Activated CD8-positive, alpha-beta T cell treated with anti-CD3 and anti-CD28 coated beads for 36 hours (primary cell): ENCODE measurements at regions of chr19 and their contacts with region 1.

Region 1: GRCh38 chr19:11558881-11559828 is at the start of gene ELOF1:
- DNase-seq: peak; percentile 99
- ATAC-seq: peak; percentile 96
- H3K4me3 Mint-ChIP-seq: peak within 1 kb of the TSS; percentile 91
- H3K27ac Mint-ChIP-seq: peak within 1 kb of the TSS; percentile 93
- H3K4me1 Mint-ChIP-seq: peaks cover 41% of the 10 kb centered on the region
- H3K27me3 Mint-ChIP-seq: no peaks in the 10 kb centered on the region
- CTCF ChIP-seq: no peak
- total RNA-seq, gene ELOF1: 41.3 to 45.7 TPM

Region 2: GRCh38 chr19:11570039-11570462 is 10.9 kb after region 1 on chr19:
- CTCF ChIA-PET with region 1: interaction called, 17 read pairs
- POLR2A ChIA-PET with region 1: interaction called, 7 read pairs
- intact Hi-C with region 1: no loop called
- DNase-seq: no peak
- ATAC-seq: no peak
- H3K4me3 Mint-ChIP-seq: no peak overlapping the region
- H3K27ac Mint-ChIP-seq: no peak overlapping the region
- H3K4me1 Mint-ChIP-seq: peaks cover 11% of the 10 kb centered on the region
- H3K27me3 Mint-ChIP-seq: no peaks in the 10 kb centered on the region
- CTCF ChIP-seq: no peak

Region 3: GRCh38 chr19:11581740-11582139 is 22.6 kb after region 1 on chr19:
- CTCF ChIA-PET with region 1: interaction called, 28 read pairs
- POLR2A ChIA-PET with region 1: interaction called, 17 read pairs
- intact Hi-C with region 1: loop called (anchors 2 kb)
- DNase-seq: peak; percentile 82
- ATAC-seq: peak; percentile 89
- H3K4me3 Mint-ChIP-seq: peak overlapping the region; percentile 65
- H3K27ac Mint-ChIP-seq: peak overlapping the region; percentile 94
- H3K4me1 Mint-ChIP-seq: peaks cover 36% of the 10 kb centered on the region
- H3K27me3 Mint-ChIP-seq: no peaks in the 10 kb centered on the region
- CTCF ChIP-seq: no peak

Region 4: DNA sequence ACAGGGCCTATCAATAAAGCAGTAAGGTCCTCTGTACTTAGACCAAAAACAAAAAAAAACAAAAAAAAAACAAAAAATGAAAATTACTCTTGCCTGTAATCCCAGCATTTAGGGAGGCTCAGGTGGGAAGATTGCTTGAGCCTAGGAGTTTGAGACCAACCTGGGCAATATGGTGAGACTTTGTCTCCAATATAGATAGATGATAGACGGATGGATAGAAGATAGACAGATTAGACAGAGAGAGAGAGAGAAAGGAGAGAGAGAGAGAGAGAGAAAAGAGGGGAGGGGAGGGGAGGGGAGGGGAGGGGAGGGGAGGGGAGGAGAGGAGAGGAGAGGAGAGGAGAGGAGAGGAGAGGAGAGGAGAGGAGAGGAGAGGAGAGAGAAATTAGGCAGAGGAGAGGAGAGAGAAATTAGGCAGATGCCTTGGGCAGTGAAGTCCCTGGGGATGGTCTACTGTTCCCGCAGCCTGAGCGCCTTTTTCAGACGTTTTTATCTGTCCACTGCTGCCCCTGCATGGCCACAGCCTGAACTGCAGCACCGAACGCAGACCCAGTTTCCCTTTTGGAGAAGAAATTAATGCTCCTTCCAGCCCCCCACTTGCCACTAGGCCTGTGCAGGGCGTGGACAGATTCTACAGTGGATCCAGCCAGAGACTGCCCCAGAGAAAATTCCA is 28.3 kb after region 1 on chr19:
- CTCF ChIA-PET with region 1: interaction called, 39 read pairs
- POLR2A ChIA-PET with region 1: interaction called, 17 read pairs
- intact Hi-C with region 1: loop called (anchors 2 kb)
- DNase-seq: peak; percentile 90
- ATAC-seq: peak; percentile 100
- H3K4me3 Mint-ChIP-seq: no peak overlapping the region
- H3K27ac Mint-ChIP-seq: no peak overlapping the region
- H3K4me1 Mint-ChIP-seq: peaks cover 8% of the 10 kb centered on the region
- H3K27me3 Mint-ChIP-seq: no peaks in the 10 kb centered on the region
- CTCF ChIP-seq: peak; percentile 86

Region 5: DNA sequence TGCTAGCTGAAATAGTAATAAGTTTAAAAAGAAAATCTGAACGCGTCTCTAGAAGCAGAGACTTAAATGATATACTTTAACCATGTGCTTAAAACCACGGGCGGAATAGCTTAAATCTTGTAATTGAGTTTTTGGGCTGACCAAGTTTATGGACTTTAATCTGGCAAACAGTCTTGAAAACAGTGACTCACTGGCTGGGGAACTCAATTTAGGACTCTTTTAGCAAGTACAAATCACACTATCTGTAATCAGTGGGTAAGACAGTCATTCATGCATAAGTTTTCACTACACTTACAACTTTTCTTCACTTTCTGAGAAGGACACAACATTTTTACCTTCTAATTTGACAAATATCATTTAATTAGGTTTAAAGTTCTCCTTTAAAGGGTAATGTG is 64.9 kb after region 1 on chr19:
- CTCF ChIA-PET with region 1: no interaction called
- POLR2A ChIA-PET with region 1: no interaction called
- intact Hi-C with region 1: no loop called
- DNase-seq: no peak
- ATAC-seq: no peak
- H3K4me3 Mint-ChIP-seq: peak overlapping the region; percentile 68
- H3K27ac Mint-ChIP-seq: no peak overlapping the region
- H3K4me1 Mint-ChIP-seq: peaks cover 13% of the 10 kb centered on the region
- H3K27me3 Mint-ChIP-seq: peaks cover 5% of the 10 kb centered on the region
- CTCF ChIP-seq: no peak

Region 6: DNA sequence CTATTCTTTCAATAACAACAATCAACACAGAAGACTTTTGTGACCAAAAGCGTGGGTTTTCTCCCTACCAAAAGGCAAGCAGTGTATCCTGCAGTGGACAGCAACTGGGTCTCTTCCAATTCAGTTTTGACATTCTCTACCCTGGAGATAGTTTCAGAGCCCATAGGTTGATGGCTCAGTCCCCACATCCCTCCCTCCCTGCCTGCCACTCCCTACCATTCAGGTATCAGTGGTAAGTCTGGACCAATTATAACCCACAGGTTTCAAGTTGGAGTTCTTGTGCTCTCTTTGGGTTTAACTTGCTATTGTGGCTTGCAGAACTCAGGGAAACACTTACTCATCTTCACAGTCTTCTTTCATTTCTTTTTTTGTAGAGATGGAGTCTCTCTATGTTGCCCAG is 119.3 kb after region 1 on chr19:
- CTCF ChIA-PET with region 1: no interaction called
- POLR2A ChIA-PET with region 1: no interaction called
- intact Hi-C with region 1: no loop called
- DNase-seq: no peak
- ATAC-seq: no peak
- H3K4me3 Mint-ChIP-seq: no peak overlapping the region
- H3K27ac Mint-ChIP-seq: no peak overlapping the region
- H3K4me1 Mint-ChIP-seq: peaks cover 10% of the 10 kb centered on the region
- H3K27me3 Mint-ChIP-seq: peaks cover 28% of the 10 kb centered on the region
- CTCF ChIP-seq: no peak